ENCODE measurements at regions of chr5 and their contacts with region 1.

Region 1: DNA sequence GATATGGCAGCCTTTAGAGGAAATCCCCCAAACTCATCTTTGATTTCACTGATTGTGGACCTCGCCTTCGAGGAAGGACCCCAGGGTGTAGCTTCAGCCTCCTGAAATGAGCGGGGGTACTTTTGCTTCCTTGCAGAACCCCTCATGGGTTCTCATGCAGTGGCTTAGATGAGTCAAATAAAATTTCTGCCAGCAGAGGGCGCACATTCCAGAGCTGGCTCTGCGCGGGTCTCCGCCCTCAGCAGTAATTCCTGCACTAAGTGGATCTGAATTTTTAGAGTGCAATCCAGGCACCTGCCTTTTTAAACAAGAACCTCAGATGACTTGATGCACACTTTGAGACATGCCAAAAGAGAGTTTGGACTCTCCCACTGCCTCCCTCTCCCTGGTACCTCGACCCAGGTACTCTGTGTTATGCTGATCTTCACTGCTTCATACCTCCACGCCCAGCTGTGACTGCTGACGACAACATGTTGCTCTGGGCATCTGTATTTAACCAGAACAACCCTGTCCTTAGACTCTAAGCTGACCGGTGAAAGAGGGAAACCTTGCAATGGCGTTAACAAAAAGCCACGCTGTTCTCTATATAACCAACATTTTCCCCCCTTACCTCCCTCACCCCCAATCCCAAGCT is 7.3 kb downstream of the EGFLAM start:
- DNase-seq: peak; percentile 19
- ATAC-seq: peak; percentile 100
- H3K4me3 ChIP-seq: no peak overlapping the region
- H3K27ac ChIP-seq: no peak overlapping the region
- H3K4me1 ChIP-seq: peaks cover 3% of the 10 kb centered on the region in 2 experiments; a peak in 1 of 4 replicates
- H3K27me3 ChIP-seq: peaks cover 34% of the 10 kb centered on the region
- CTCF ChIP-seq: peak; percentile 25 to 85 (median 64); a peak in 5 of 6 replicates
- POLR2A ChIP-seq: no peak
- RAD21 ChIP-seq: peak; percentile 37

Region 2: DNA sequence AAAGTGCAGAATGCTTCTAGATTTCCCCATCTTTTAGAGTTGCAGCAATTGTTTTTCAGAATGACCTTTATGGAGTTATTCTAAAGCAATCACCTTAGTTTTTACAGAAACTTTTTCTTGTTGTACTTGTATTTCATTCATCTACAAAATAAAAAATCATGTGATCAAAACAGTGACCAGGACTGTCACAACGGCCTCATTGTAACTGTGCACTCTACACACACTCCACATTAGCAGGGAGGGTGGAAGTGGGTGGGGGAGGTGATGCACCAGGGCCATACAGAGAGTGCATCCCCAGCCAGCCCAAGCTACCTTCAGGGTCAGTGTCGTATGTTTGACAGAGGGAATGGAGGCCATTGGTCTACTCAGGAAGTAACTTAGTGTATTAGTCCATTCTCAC is 19.6 kb after region 1 on chr5:
- CTCF ChIA-PET with region 1: interaction called, 10 read pairs
- POLR2A ChIA-PET with region 1: no interaction called
- RAD21 ChIA-PET with region 1: no interaction called
- intact Hi-C with region 1: no loop called
- DNase-seq: no peak
- ATAC-seq: no peak
- H3K4me3 ChIP-seq: no peak overlapping the region
- H3K27ac ChIP-seq: no peak overlapping the region
- H3K4me1 ChIP-seq: no peaks in the 10 kb centered on the region
- H3K27me3 ChIP-seq: peaks cover 9% of the 10 kb centered on the region; the same call in 1 of the 2 replicates
- CTCF ChIP-seq: no peak
- POLR2A ChIP-seq: no peak
- RAD21 ChIP-seq: no peak

Region 3: GRCh38 chr5:40010436-40010835 is 1744.8 kb after region 1 on chr5:
- CTCF ChIA-PET with region 1: no interaction called
- POLR2A ChIA-PET with region 1: no interaction called
- RAD21 ChIA-PET with region 1: no interaction called
- intact Hi-C with region 1: no loop called
- DNase-seq: no peak
- ATAC-seq: no peak
- H3K4me3 ChIP-seq: no peak overlapping the region
- H3K27ac ChIP-seq: no peak overlapping the region
- H3K4me1 ChIP-seq: no peaks in the 10 kb centered on the region
- H3K27me3 ChIP-seq: no peaks in the 10 kb centered on the region
- CTCF ChIP-seq: no peak
- POLR2A ChIP-seq: no peak
- RAD21 ChIP-seq: no peak

Measured in HCT116 (cell line).